Astrocyte of the cerebellum (primary cell): ENCODE measurements at regions of chr3 and their contacts with region 1.

Region 1: GRCh38 chr3:52834871-52835501 is at the start of gene MUSTN1:
- DNase-seq: no peak
- H3K4me3 ChIP-seq: no peak within 1 kb of the TSS
- CTCF ChIP-seq: no peak

Region 2: DNA sequence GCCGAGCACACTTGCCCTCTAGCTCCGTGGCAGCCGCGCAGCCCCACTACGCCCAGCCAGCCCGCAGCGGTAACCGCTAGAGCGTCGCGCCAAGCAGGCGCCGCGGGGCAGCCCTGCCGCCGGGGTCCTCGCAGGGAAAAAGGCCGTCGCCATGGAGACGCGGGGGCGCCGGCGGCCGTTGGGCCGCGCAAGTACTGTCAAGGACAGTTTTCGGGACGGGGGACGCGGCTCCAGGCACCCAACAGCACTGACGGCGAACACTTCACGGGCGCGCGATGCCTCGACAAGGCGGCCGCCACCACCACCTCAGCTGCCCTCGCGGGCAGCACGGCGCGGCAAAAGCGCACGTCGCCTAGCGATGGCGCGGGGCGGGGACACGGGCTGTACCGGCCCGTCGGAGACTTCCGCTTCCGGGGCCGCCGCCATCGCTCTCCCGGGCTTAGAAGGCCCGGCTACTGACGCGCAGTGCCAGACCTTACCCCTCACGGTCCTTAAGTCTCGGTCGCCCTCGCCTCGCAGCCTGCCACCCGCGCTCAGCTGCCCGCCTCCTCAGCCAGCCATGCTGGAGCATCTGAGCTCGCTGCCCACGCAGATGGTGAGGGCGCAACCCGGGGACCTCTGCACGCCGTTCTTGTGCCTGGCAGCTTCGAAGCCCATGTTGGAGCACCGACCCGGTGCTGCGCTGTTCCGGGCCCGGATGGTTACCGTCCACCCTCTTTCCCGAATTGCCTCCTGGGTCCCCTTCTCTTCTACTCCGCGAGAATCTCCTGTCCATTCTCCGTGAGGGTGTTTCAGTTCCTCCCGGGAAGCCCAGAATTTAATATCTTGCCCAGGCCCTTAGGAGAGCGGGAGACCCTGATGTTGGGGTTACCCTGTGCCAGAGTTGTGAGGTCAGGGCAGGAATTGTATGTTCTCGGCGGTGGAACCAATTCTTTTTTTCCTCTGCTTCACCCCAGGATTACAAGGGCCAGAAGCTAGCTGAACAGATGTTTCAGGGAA is 129.0 kb before region 1 on chr3 and contains the starts of genes GLT8D1 and SPCS1:
- in situ Hi-C with region 1: no loop called
- DNase-seq: peak; percentile 59
- H3K4me3 ChIP-seq: peak within 1 kb of the TSS; percentile 65
- CTCF ChIP-seq: no peak

Region 3: DNA sequence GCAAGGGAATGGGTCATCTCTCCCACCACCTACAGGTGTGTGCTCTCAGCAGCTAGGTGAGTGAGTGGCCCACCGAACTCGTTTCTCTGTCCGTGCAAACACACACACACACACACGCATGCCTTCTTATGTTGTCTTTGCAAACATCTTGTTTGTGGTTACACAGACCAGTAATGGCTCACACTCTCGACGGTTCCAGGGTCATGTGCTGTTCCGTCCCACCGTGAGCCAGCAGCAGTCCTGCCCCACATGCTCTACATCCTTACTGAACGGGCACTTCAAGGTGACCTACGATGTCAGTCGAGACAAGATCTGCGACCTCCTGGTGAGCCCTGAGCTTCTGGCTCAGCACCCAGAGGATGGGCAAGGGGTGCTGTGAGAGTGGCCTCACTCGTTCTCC is 53.2 kb before region 1 on chr3:
- in situ Hi-C with region 1: loop called (anchors 5 kb)
- DNase-seq: no peak
- H3K4me3 ChIP-seq: no peak overlapping the region
- CTCF ChIP-seq: no peak

Region 4: GRCh38 chr3:52897130-52898122 is 62.4 kb after region 1 on chr3 and contains the start of gene STIMATE:
- in situ Hi-C with region 1: loop called (anchors 5 kb)
- DNase-seq: peak; percentile 36
- H3K4me3 ChIP-seq: peak within 1 kb of the TSS; percentile 83
- CTCF ChIP-seq: no peak